ENCODE measurements at regions of chr7 and their contacts with region 1.

Region 1: GRCh38 chr7:101058355-101058754 is 26.9 kb upstream of the TRIM56 start:
- DNase-seq: peak; percentile 72
- H3K4me3 ChIP-seq: no peak overlapping the region
- H3K27ac ChIP-seq: no peak overlapping the region
- H3K4me1 ChIP-seq: peaks cover 0 to 6% (median 2%) of the 10 kb centered on the region in 6 donors
- H3K27me3 ChIP-seq: peaks cover 0 to 88% (median 29%) of the 10 kb centered on the region in 7 donors
- CTCF ChIP-seq: no peak
- POLR2A ChIP-seq: no peak

Region 2: GRCh38 chr7:100894860-100895421 is 163.4 kb before region 1 on chr7:
- intact Hi-C with region 1: loop called (anchors 5 kb)
- DNase-seq: peak; percentile 89
- H3K4me3 ChIP-seq: peak overlapping the region; percentile 34 to 73 (median 48)
- H3K27ac ChIP-seq: peak overlapping the region in 5 of 8 donors; percentile 11 to 51 (median 40)
- H3K4me1 ChIP-seq: peaks cover 22 to 52% (median 42%) of the 10 kb centered on the region in 6 donors
- H3K27me3 ChIP-seq: peaks cover 3 to 100% (median 57%) of the 10 kb centered on the region in 7 donors
- CTCF ChIP-seq: peak; percentile 52 to 87 (median 77)
- POLR2A ChIP-seq: no peak

Region 3: GRCh38 chr7:101333912-101334311 is 275.6 kb after region 1 on chr7:
- intact Hi-C with region 1: no loop called
- DNase-seq: no peak
- H3K4me3 ChIP-seq: no peak overlapping the region
- H3K27ac ChIP-seq: no peak overlapping the region
- H3K4me1 ChIP-seq: no peaks in the 10 kb centered on the region
- H3K27me3 ChIP-seq: peaks cover 0 to 22% (median 0%) of the 10 kb centered on the region in 7 donors
- CTCF ChIP-seq: no peak
- POLR2A ChIP-seq: no peak

Region 4: GRCh38 chr7:102044984-102045673 is 986.8 kb after region 1 on chr7:
- intact Hi-C with region 1: no loop called
- DNase-seq: no peak
- H3K4me3 ChIP-seq: peak overlapping the region in 3 of 8 donors; percentile 3 to 21 (median 19)
- H3K27ac ChIP-seq: peak overlapping the region in 2 of 8 donors; percentile 2 to 38
- H3K4me1 ChIP-seq: peaks cover 6 to 24% (median 18%) of the 10 kb centered on the region in 6 donors
- H3K27me3 ChIP-seq: no peaks in the 10 kb centered on the region
- CTCF ChIP-seq: no peak
- POLR2A ChIP-seq: no peak